ENCODE measurements at regions of chr13 and their contacts with region 1.

Region 1: DNA sequence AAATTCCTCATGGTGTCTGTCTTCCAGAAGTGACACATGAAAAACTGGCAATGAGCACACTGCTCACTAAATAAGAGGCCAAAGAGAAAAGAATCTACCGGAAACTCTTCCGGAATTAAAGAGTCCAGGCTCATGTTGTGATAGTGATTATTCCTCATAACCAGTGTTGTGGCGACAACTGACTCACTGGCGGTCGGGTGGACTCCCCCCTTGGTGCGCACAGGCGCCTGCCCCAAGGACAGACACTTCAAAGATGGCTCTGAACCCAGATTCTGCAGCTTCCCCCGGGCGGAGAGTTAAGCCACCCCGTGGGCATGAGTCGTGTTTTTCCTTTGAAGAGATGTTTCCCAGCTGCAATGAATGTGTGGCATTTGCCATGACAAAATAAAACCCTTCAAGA is 10.3 kb downstream of the IL17D start:
- DNase-seq: no peak
- H3K4me3 ChIP-seq: no peak overlapping the region
- H3K27ac ChIP-seq: peak overlapping the region; percentile 67 to 79 (median 71)
- H3K4me1 ChIP-seq: peaks cover 24 to 44% (median 40%) of the 10 kb centered on the region in 4 donors
- H3K27me3 ChIP-seq: no peaks in the 10 kb centered on the region
- CTCF ChIP-seq: no peak
- EP300 ChIP-seq: no peak
- POLR2A ChIP-seq: no peak

Region 2: GRCh38 chr13:20426766-20427448 is 286.8 kb before region 1 on chr13:
- intact Hi-C with region 1: no loop called
- DNase-seq: peak; percentile 86
- H3K4me3 ChIP-seq: no peak overlapping the region
- H3K27ac ChIP-seq: no peak overlapping the region
- H3K4me1 ChIP-seq: peaks cover 0 to 7% (median 0%) of the 10 kb centered on the region in 4 donors
- H3K27me3 ChIP-seq: no peaks in the 10 kb centered on the region
- CTCF ChIP-seq: no peak
- EP300 ChIP-seq: no peak
- POLR2A ChIP-seq: no peak

Region 3: GRCh38 chr13:20495082-20496023 is 218.4 kb before region 1 on chr13:
- intact Hi-C with region 1: loop called (anchors 5 kb)
- DNase-seq: no peak
- H3K4me3 ChIP-seq: peak overlapping the region in 3 of 4 donors; percentile 4 to 18 (median 13)
- H3K27ac ChIP-seq: no peak overlapping the region
- H3K4me1 ChIP-seq: peaks cover 0 to 17% (median 14%) of the 10 kb centered on the region in 4 donors
- H3K27me3 ChIP-seq: no peaks in the 10 kb centered on the region
- CTCF ChIP-seq: peak; percentile 91 to 93 (median 92)
- EP300 ChIP-seq: no peak
- POLR2A ChIP-seq: no peak

Region 4: DNA sequence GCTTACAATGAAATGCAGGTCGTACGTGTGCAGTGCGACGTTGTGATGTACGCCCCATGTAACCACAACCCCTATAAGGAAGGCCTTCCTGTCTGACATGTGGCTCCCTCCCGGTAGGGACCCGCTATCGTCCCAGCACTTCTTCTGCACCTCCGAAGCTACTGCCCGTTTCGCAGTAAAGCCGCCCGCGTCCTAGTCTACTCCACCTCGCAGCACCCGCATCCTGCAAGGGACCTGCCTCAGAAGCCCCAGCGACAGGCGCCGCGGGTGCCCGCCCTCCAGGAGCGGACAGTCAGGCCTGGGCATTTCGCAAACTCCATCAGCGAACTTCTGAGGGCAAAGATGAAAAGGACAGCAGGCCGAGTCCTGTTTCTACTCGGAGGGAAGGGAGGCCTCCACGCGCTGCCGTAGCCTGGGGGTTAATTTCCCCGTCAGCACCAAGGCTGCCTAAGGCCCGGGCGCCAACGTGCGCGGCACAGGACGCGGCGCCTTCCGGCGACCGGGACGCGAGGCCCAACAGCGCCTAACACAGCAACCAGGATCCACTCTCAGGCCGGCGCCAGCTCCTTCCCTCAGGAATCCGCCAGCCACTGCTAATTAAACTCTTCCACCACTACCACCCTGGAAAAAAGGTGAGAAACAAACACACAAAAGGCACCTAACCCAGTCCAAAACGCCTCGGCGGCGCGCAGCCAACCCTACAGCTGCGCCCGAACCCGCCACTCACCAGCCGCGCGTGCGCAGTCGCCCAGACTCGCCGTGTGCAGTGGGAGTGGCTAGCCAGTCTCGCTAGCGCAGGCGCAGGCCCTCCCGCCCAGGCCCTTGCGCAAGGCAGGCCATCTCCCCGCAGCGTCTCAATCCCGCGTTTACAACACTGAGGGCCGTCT is 59.7 kb after region 1 on chr13 and contains the start of gene EEF1AKMT1:
- intact Hi-C with region 1: loop called (anchors 5 kb)
- DNase-seq: peak; percentile 95
- H3K4me3 ChIP-seq: peak within 1 kb of the TSS; percentile 61 to 81 (median 68)
- H3K27ac ChIP-seq: peak within 1 kb of the TSS; percentile 88 to 95 (median 92)
- H3K4me1 ChIP-seq: peaks cover 8 to 15% (median 14%) of the 10 kb centered on the region in 4 donors
- H3K27me3 ChIP-seq: no peaks in the 10 kb centered on the region
- CTCF ChIP-seq: peak in 2 of 3 experiments; percentile 3 to 19
- EP300 ChIP-seq: peak; percentile 3
- POLR2A ChIP-seq: peak; percentile 78
- total RNA-seq, gene EEF1AKMT1: 13.1 to 18.7 (median 14.8) TPM

Region 5: DNA sequence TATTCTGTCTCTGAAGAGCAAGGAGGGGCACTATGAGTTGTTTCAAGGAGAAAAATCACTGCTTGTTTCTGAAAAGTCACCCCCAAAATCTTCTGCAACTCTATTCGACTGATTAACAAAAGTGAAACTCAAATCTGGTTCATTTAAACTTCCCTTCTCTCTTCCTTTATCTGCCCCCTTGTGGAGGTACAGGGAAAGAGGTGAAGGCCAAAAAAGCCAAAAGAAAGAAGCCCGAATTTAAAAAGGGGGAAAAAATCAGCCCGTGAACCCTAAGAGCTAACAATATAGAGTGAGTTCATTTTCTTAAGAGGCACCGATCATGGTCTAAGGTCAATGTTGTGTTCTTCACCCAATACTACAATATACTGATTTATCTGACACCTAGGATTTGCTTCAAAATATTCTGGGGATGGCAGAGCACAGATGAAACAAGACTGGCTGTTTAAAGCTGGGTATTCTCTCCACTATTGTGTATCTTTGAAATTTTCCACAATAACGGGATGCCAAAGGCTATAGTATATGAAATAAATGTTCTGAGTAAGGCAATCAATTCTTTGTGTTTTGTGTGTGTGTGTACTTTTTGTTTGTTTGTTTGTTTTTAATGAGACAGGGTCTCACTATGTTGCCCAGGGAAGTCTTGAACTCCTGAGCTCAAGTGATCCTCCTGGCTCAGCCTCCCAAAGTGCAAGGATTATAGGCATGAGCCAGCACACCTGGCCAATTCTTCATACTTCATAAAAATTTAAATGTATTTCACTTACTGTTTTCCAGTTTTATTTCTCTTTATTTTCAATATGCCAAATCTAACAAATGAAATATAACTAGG is 115.0 kb after region 1 on chr13:
- intact Hi-C with region 1: loop called (anchors 1 kb)
- DNase-seq: no peak
- H3K4me3 ChIP-seq: peak overlapping the region; percentile 16 to 45 (median 36)
- H3K27ac ChIP-seq: peak overlapping the region; percentile 21 to 57 (median 46)
- H3K4me1 ChIP-seq: peaks cover 5 to 85% (median 77%) of the 10 kb centered on the region in 4 donors
- H3K27me3 ChIP-seq: no peaks in the 10 kb centered on the region
- CTCF ChIP-seq: peak; percentile 79 to 88 (median 86)
- EP300 ChIP-seq: no peak
- POLR2A ChIP-seq: no peak

Region 6: DNA sequence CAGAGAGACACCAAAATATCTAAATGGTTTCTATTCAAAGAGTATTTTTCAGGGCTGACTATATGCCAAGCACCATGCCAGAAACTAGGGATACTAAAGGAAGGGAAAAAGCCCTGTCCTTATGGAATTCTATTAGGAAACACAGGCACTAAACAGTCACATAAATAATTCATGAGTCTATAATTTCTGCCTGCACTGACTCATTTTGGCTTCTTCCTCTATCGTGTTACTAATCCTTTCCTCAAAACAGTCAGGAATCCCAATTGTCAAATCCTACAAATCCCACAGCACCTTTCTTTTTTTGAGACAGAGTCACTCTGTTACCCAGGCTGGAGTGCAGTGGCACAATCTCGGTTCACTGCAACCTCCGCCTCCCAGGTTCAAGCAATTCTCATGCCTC is 159.6 kb after region 1 on chr13:
- intact Hi-C with region 1: loop called (anchors 5 kb)
- DNase-seq: no peak
- H3K4me3 ChIP-seq: no peak overlapping the region
- H3K27ac ChIP-seq: no peak overlapping the region
- H3K4me1 ChIP-seq: peaks cover 14 to 22% (median 18%) of the 10 kb centered on the region in 4 donors
- H3K27me3 ChIP-seq: no peaks in the 10 kb centered on the region
- CTCF ChIP-seq: no peak
- EP300 ChIP-seq: no peak
- POLR2A ChIP-seq: no peak

Region 7: GRCh38 chr13:20924758-20925394 is 211.1 kb after region 1 on chr13:
- intact Hi-C with region 1: loop called (anchors 2 kb)
- DNase-seq: peak; percentile 93
- H3K4me3 ChIP-seq: no peak overlapping the region
- H3K27ac ChIP-seq: no peak overlapping the region
- H3K4me1 ChIP-seq: no peaks in the 10 kb centered on the region
- H3K27me3 ChIP-seq: no peaks in the 10 kb centered on the region
- CTCF ChIP-seq: peak; percentile 70 to 74 (median 72)
- EP300 ChIP-seq: no peak
- POLR2A ChIP-seq: no peak

Region 8: GRCh38 chr13:21849323-21849722 is 1135.6 kb after region 1 on chr13:
- intact Hi-C with region 1: no loop called
- DNase-seq: no peak
- H3K4me3 ChIP-seq: no peak overlapping the region
- H3K27ac ChIP-seq: no peak overlapping the region
- H3K4me1 ChIP-seq: no peaks in the 10 kb centered on the region
- H3K27me3 ChIP-seq: no peaks in the 10 kb centered on the region
- CTCF ChIP-seq: peak in 2 of 3 experiments; percentile 29 to 46
- EP300 ChIP-seq: no peak
- POLR2A ChIP-seq: no peak